Astrocyte of the cerebellum (primary cell): ENCODE measurements at regions of chr16 and their contacts with region 1.

Region 1: DNA sequence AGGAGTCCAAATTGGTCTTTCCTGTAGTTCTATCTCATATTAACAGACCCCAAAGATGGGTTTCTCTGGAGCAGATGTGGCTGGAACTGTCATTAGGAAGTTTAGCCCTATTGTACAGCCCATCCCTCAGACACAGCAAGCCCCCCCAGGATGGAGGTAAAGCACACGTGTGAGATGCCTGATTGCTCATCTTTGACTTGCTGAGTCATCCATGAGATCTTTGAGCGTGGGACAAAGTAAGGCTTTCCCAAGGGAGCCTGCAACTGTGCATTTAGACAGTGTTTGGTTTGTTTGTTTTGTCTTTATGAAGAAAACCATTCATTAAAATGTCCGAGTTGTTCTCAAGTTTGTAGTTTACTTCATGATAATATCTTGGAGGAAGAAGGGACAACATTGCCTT is 145.3 kb upstream of the CDH13 start:
- DNase-seq: no peak
- H3K4me3 ChIP-seq: no peak overlapping the region
- CTCF ChIP-seq: no peak

Region 2: DNA sequence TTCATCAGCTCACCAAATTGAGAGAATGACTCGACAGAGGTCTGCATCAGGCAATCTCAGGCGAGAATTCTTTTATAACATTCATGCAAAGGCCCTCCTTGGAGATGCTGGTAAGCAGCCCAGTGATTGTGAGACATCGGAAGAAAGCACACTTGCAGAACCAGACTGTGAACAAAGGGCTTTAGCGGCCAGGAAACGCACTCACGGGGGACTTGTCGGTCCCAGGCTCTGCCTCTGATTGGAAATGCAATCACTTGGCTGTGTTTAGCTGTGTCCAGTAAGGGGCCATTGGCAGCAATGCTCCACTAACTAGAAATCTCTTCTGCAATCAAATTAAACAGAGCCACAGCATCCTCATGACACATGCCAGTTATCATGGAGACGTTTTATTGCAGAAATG is 81.4 kb before region 1 on chr16:
- in situ Hi-C with region 1: no loop called
- DNase-seq: no peak
- H3K4me3 ChIP-seq: no peak overlapping the region
- CTCF ChIP-seq: no peak

Region 3: DNA sequence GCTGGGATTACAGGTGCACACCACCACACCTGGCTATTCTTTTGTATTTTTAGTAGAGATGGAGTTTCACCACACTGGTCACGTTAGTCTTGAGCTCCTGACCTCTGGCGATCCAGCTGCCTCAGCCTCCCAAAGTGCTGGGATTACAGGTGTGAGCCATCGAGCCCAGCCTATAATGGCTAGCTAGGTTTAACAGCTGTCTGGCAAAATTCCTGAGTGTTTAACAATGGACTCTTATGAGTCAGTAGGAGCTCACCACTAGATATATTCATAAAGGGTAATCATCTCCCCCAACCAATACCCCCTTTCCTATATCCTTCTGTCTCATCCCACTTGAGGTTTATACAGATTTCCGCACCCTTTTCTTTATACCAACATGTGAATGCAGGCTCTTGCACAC is 53.8 kb after region 1 on chr16:
- in situ Hi-C with region 1: no loop called
- DNase-seq: no peak
- H3K4me3 ChIP-seq: no peak overlapping the region
- CTCF ChIP-seq: no peak

Region 4: GRCh38 chr16:82580298-82580890 is 98.9 kb after region 1 on chr16:
- in situ Hi-C with region 1: loop called (anchors 5 kb)
- DNase-seq: peak; percentile 12
- H3K4me3 ChIP-seq: no peak overlapping the region
- CTCF ChIP-seq: peak; percentile 29

Region 5: GRCh38 chr16:82748026-82748425 is 266.6 kb after region 1 on chr16:
- in situ Hi-C with region 1: no loop called
- DNase-seq: peak; percentile 82
- H3K4me3 ChIP-seq: no peak overlapping the region
- CTCF ChIP-seq: peak; percentile 42